Uterus (tissue), 4 donors: ENCODE measurements at regions of chr15 and their contacts with region 1.

Region 1: DNA sequence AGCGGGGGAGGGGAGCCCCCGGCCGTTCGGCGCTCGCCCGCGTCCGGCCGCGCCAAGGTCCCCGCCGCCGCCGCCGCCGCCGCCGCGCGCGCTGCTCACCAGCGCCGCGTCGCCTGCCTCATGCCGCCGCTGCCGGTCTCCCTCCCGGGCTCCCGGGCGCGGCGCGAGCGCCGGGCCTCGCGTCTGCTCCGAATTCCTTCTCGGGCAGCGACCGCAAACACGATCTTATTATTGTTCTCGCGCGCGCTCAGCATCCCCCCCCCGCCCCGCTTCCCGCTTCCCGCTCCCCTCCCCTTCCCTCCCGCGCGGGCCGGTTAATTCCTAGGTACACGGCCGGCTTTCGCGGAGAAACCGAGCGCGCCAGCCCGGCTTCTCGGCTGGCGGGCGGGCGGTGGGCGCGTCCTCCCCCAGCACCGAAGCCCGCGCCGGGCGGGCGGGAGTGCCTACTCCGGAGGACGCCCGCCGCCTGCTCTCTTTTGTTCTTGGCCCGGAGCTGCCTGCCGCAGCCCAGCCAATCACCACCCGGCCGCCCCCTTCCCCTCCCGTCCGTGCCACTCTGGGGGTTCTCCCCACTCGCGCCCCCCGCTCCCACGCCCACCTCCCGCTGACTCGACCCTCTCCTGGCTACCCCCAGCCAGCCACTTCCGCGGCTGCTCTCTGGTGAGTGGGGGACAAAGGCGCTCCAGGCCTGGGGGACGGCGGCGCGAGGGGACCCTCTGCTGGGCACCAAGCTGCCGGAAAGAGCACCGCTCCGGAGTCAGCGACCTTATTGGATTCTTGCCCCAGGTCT is at the start of gene HDGFL3:
- DNase-seq: peak; percentile 64 to 70
- H3K4me3 ChIP-seq: peak within 1 kb of the TSS; percentile 78 to 82
- H3K27ac ChIP-seq: peak within 1 kb of the TSS; percentile 92 to 94
- H3K4me1 ChIP-seq: no peaks in the 10 kb centered on the region
- H3K27me3 ChIP-seq: no peaks in the 10 kb centered on the region
- CTCF ChIP-seq: no peak
- POLR2A ChIP-seq: no peak
- total RNA-seq, gene HDGFL3: 12.8 to 70.9 (median 38.1) TPM

Region 2: DNA sequence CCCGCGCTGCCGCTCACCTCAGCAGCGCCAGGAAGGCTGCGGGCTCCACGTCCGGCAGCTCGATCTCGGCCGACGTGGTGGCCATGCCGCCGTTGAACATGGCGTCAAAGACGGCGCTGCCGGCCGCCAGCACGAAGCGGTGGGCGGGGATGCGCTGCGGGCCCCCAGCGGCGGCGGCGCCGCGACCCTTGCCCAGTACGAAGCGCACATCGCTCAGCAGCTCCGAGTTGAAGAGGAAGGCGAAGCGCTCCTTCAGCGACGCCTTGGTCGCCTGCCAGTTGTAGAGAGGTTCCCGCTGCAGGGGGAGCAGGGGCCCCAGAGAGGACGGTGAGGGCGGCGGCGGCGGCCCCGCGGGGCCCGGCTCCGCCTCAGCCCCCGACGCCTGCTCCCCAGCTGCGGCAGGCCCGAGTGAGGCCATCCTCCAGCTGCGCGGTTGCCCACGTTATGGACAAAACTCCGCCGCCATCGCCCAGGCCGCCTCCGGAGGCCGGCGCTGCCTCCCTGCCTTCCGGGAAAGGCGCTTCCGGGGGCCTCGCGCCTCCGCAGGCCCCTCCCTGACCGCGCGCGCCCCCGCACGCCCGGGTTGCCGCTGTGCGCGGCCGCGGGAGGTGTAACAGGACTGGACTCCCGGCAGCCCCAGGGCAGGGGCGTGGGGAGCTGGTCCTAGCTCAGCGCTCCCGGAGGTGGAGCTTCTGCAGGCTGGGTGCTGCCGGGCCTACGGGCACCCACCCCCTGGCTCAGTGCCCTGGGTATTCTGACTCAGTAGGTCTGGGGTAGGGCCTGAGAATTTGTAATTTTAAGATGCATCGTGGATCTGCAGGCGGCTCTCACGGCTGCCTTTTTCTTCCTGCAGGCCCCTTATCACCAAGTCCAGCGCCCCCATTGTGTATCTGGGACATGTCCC is 140.8 kb before region 1 on chr15 and contains the start of gene BTBD1:
- intact Hi-C with region 1: loop called (anchors 5 kb)
- DNase-seq: peak; percentile 91
- H3K4me3 ChIP-seq: peak within 1 kb of the TSS; percentile 39 to 92
- H3K27ac ChIP-seq: peak within 1 kb of the TSS; percentile 86 to 93
- H3K4me1 ChIP-seq: no peaks in the 10 kb centered on the region
- H3K27me3 ChIP-seq: no peaks in the 10 kb centered on the region
- CTCF ChIP-seq: peak in 2 of 4 experiments; percentile 16 to 35
- POLR2A ChIP-seq: peak; percentile 64 to 91
- total RNA-seq, gene BTBD1: 54.9 to 140 (median 101) TPM